Right ventricle myocardium inferior (tissue), 1 donor: ENCODE measurements at regions of chr12 and their contacts with region 1.

Region 1: DNA sequence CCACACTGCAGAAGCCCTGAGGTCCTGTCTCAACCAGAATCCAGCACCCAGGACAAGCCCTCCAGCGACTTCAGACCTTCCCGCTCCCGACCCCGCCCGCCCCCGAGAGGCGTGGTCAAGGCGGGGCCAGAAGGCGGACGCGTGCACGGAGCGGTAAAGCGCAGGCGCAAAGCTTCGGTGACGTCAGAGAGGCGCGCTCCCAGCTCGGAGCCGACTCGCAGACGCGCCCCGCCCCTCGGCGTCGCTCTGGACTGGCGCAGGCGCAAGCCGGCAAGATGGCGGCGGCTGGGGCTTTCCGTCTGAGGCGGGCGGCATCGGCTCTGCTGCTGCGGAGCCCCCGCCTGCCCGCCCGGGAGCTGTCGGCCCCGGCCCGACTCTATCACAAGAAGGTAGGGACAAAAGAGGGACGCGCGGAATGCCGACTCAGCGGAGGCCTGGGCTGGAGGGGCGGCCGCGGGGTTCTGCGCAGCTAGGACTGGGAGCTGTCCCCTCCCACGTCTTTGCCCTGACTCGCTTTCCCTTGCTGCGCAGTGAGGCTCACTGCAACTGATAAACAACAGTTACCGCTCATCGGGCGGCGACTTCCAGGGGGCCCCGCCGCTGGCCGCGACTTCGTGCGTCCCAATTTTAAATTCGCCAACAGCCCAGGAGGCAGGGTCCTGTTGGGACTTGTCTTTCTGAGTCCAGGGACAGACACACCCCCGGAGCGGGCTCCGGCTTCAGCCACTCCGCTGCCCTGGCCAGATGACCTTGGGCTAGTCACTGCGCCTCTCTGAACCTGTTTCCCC is at the start of gene ISCU:
- DNase-seq: peak; percentile 98
- ATAC-seq: peak; percentile 91
- total RNA-seq, gene ISCU: 444 TPM

Region 2: GRCh38 chr12:108618079-108618952 is 55.8 kb after region 1 on chr12:
- intact Hi-C with region 1: loop called (anchors 1 kb)
- DNase-seq: peak; percentile 91
- ATAC-seq: peak; percentile 83

Region 3: GRCh38 chr12:108838194-108839017 is 275.9 kb after region 1 on chr12:
- intact Hi-C with region 1: no loop called
- DNase-seq: peak; percentile 95
- ATAC-seq: peak; percentile 86